Heart right ventricle (tissue), 16 donors: ENCODE measurements at regions of chr1 and their contacts with region 1.

Region 1: GRCh38 chr1:164786980-164787833 is 228.2 kb downstream of the PBX1 start:
- DNase-seq: peak; percentile 78 to 84
- ATAC-seq: peak; percentile 84 to 92 (median 88)
- H3K4me3 ChIP-seq: peak overlapping the region in 1 of 10 donors; percentile 13
- H3K27ac ChIP-seq: peak overlapping the region in 7 of 10 donors; percentile 2 to 78 (median 55)
- H3K4me1 ChIP-seq: peaks cover 18 to 70% (median 55%) of the 10 kb centered on the region in 9 donors
- H3K27me3 ChIP-seq: no peaks in the 10 kb centered on the region
- CTCF ChIP-seq: peak; percentile 90 to 96 (median 91)

Region 2: GRCh38 chr1:164092603-164093353 is 694.4 kb before region 1 on chr1:
- intact Hi-C with region 1: no loop called
- DNase-seq: no peak
- ATAC-seq: no peak
- H3K4me3 ChIP-seq: no peak overlapping the region
- H3K27ac ChIP-seq: no peak overlapping the region
- H3K4me1 ChIP-seq: no peaks in the 10 kb centered on the region
- H3K27me3 ChIP-seq: no peaks in the 10 kb centered on the region
- CTCF ChIP-seq: peak in 5 of 9 donors; percentile 13 to 28 (median 17)

Region 3: DNA sequence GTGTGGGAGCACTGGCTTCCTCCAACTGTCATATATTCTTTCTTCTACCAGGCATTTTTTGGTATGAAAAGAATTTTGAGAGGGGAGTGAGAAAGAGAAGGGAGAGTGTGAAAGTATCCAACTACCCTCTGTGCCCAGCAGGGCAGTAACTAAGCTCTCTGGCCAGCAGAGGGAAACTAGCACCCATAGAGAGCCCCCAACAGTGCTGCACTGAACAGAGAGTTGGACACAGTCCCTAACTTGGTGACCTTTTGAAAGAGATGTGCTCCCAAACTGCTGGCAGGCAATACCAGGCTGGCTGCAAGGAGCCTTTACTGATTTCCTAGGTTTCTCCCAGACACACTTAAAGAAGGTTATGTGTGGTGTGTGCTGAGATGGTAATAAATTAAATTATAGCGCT is 347.0 kb before region 1 on chr1:
- intact Hi-C with region 1: loop called in 7 of 10 experiments (anchors 5 to 10 kb)
- DNase-seq: peak in 1 of 2 donors; percentile 56
- ATAC-seq: peak; percentile 88 to 100 (median 98)
- H3K4me3 ChIP-seq: no peak overlapping the region
- H3K27ac ChIP-seq: peak overlapping the region in 1 of 10 donors; percentile 3
- H3K4me1 ChIP-seq: peaks cover 0 to 20% (median 3%) of the 10 kb centered on the region in 9 donors
- H3K27me3 ChIP-seq: no peaks in the 10 kb centered on the region
- CTCF ChIP-seq: peak in 8 of 9 donors; percentile 44 to 70 (median 56)

Region 4: GRCh38 chr1:164558461-164559341 is 228.5 kb before region 1 on chr1 and contains the start of gene PBX1:
- intact Hi-C with region 1: loop called in 8 of 10 experiments (anchors 5 to 10 kb)
- DNase-seq: peak; percentile 96 to 98
- ATAC-seq: peak; percentile 97 to 100 (median 99)
- H3K4me3 ChIP-seq: peak within 1 kb of the TSS; percentile 55 to 79 (median 73)
- H3K27ac ChIP-seq: peak within 1 kb of the TSS; percentile 46 to 91 (median 84)
- H3K4me1 ChIP-seq: peaks cover 0 to 12% (median 8%) of the 10 kb centered on the region in 9 donors
- H3K27me3 ChIP-seq: peaks cover 0 to 15% (median 0%) of the 10 kb centered on the region in 7 donors
- CTCF ChIP-seq: no peak
- total RNA-seq, gene PBX1: 53.3 to 91.8 (median 64.4) TPM

Region 5: GRCh38 chr1:164625001-164625617 is 162.1 kb before region 1 on chr1:
- intact Hi-C with region 1: loop called in 4 of 10 experiments (anchors 5 to 10 kb)
- DNase-seq: no peak
- ATAC-seq: no peak
- H3K4me3 ChIP-seq: no peak overlapping the region
- H3K27ac ChIP-seq: peak overlapping the region in 1 of 10 donors; percentile 17
- H3K4me1 ChIP-seq: peaks cover 4 to 65% (median 41%) of the 10 kb centered on the region in 9 donors
- H3K27me3 ChIP-seq: no peaks in the 10 kb centered on the region
- CTCF ChIP-seq: peak in 4 of 9 donors; percentile 17 to 34 (median 22)

Region 6: GRCh38 chr1:164707868-164708331 is 79.3 kb before region 1 on chr1:
- intact Hi-C with region 1: loop called in 5 of 10 experiments (anchors 5 to 10 kb)
- DNase-seq: no peak
- ATAC-seq: peak in 6 of 8 donors; percentile 22 to 79 (median 55)
- H3K4me3 ChIP-seq: no peak overlapping the region
- H3K27ac ChIP-seq: peak overlapping the region in 9 of 10 donors; percentile 10 to 71 (median 66)
- H3K4me1 ChIP-seq: peaks cover 19 to 89% (median 66%) of the 10 kb centered on the region in 9 donors
- H3K27me3 ChIP-seq: peaks cover 0 to 5% (median 0%) of the 10 kb centered on the region in 7 donors
- CTCF ChIP-seq: no peak

Region 7: GRCh38 chr1:164914208-164914607 is 127.0 kb after region 1 on chr1:
- intact Hi-C with region 1: loop called in 5 of 10 experiments (anchors 5 to 10 kb)
- DNase-seq: no peak
- ATAC-seq: peak; percentile 66 to 88 (median 76)
- H3K4me3 ChIP-seq: no peak overlapping the region
- H3K27ac ChIP-seq: no peak overlapping the region
- H3K4me1 ChIP-seq: peaks cover 0 to 10% (median 0%) of the 10 kb centered on the region in 9 donors
- H3K27me3 ChIP-seq: no peaks in the 10 kb centered on the region
- CTCF ChIP-seq: peak in 8 of 9 donors; percentile 21 to 58 (median 43)